Activated T-helper 1 cell treated with anti-CD3 and anti-CD28 coated beads, Interleukin-12 subunit alpha, Interleukin-12 subunit beta, Interleukin-2, Interleukin-4 antibody, amounts not matched to agents 30 ng/mL and 10 ng/mL and 1 ng/mL, durations not matched to agents 14 hours and 24 hours and 36 hours (primary cell): ENCODE measurements at regions of chr2 and their contacts with region 1.

Region 1: GRCh38 chr2:8681786-8682692 is at the start of gene ID2:
- DNase-seq: peak; percentile 99
- H3K4me3 Mint-ChIP-seq: peak within 1 kb of the TSS; percentile 99
- H3K27ac Mint-ChIP-seq: peak within 1 kb of the TSS; percentile 97
- H3K4me1 Mint-ChIP-seq: peaks cover 41% of the 10 kb centered on the region
- H3K27me3 Mint-ChIP-seq: peaks cover 14% of the 10 kb centered on the region
- total RNA-seq, gene ID2: 301 and 306 TPM in 2 replicates

Region 2: GRCh38 chr2:7203055-7203467 is 1479.0 kb before region 1 on chr2:
- intact Hi-C with region 1: loop called (anchors 1 kb)
- DNase-seq: peak; percentile 27
- H3K4me3 Mint-ChIP-seq: no peak overlapping the region
- H3K27ac Mint-ChIP-seq: no peak overlapping the region
- H3K4me1 Mint-ChIP-seq: peaks cover 4% of the 10 kb centered on the region
- H3K27me3 Mint-ChIP-seq: peaks cover 4% of the 10 kb centered on the region

Region 3: DNA sequence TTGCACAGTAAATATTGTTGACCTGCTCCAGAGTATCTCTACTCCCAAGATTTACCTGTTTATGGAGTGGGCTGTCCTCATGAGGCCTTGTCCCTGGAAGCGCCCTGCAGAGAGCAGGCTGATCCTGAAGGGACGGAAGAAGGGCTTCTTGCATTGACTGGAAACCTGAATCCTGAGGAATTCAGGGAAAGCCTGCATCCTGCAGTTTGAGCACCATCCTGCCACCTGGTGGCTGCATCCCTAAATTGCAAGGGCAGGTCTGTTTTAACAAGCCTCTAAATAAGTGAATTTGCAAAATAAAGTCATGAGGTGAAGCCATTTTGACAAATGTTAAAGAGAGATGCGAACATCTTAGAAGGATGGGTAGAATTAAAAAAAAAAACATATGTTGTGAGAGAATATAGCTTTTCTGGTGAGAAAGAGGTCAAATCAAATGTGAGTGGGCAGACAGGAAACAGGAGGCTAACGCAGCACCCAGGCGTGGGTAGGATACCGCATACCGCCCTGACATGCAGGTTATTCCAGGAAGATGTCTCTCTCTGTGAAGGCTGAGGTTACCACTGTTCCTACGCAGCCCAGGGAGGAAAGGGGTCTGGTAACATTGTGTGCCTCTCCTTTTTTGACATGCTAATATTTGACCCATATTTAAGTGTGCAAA is 1009.9 kb before region 1 on chr2:
- intact Hi-C with region 1: loop called (anchors 2 kb)
- DNase-seq: peak; percentile 43
- H3K4me3 Mint-ChIP-seq: peak overlapping the region; percentile 71
- H3K27ac Mint-ChIP-seq: peak overlapping the region; percentile 93
- H3K4me1 Mint-ChIP-seq: peaks cover 79% of the 10 kb centered on the region
- H3K27me3 Mint-ChIP-seq: no peaks in the 10 kb centered on the region

Region 4: DNA sequence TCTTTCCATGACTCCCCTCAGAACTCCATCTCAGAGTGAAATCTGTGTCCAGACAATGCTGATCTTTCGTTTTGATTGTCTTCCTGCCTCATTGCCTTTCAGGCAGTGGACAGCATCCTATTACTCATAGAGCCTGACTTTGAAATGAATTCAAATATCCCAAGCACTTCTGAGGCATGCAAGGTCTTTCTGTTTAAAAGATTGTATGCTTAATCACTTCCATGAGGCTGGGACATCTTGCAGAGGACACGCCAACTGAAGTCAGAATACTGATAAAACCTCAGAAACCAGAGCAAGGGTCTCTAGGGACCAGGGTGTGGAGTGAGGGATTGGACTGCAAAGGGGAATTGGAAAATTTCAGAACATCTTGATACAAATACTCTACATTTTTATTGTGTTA is 836.7 kb before region 1 on chr2:
- intact Hi-C with region 1: loop called (anchors 1 kb)
- DNase-seq: no peak
- H3K4me3 Mint-ChIP-seq: no peak overlapping the region
- H3K27ac Mint-ChIP-seq: no peak overlapping the region
- H3K4me1 Mint-ChIP-seq: peaks cover 57% of the 10 kb centered on the region
- H3K27me3 Mint-ChIP-seq: no peaks in the 10 kb centered on the region

Region 5: GRCh38 chr2:8234757-8235374 is 447.2 kb before region 1 on chr2:
- intact Hi-C with region 1: loop called (anchors 2 kb)
- DNase-seq: no peak
- H3K4me3 Mint-ChIP-seq: no peak overlapping the region
- H3K27ac Mint-ChIP-seq: no peak overlapping the region
- H3K4me1 Mint-ChIP-seq: peaks cover 53% of the 10 kb centered on the region
- H3K27me3 Mint-ChIP-seq: peaks cover 9% of the 10 kb centered on the region

Region 6: DNA sequence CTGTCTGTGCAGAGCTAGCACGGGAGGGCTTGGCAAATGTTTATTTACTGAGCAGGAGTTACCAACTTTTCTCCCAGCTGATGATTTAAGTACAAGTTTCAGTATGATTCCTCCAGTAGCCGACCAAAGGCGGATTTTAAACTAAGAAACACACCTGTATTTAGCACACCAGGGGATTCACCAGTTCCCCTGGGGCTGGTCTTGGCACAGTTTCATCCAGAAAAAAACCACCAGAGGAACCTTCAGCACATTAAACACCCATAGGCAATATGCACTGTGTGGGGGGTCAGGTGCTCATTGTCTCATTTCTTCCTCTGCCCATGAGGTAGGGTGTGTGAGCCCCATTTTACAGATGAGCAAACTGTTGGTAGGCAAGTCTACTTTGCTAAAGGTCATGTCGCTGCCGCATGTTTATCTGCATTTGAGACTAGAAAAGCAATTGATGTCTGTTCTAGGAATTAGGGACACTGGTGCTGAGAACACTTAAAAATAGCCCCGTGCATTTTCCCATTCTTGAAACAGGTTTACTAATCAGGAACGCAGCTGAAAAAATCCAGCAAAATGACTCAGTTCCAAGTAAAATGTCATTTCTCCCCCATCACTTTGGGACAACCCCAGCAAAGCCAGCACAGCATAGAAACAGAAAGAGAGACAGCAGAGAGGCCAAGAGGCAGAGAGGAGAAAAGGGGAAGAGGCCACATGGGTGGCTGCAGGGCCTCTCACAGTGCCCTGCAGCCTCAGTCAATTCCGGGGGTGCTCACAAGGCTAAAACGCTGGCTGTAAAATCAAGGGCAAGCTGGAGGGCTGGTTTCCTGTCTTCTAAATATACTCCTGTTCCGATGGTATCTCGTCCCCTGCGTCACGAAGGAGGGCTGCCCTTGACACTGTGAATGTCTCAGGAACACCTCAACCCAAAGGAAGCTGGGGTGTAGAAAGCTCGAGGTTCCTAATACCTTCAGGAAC is 167.0 kb before region 1 on chr2:
- intact Hi-C with region 1: loop called (anchors 1 kb)
- DNase-seq: peak; percentile 58
- H3K4me3 Mint-ChIP-seq: peak overlapping the region; percentile 35
- H3K27ac Mint-ChIP-seq: peak overlapping the region; percentile 95
- H3K4me1 Mint-ChIP-seq: peaks cover 68% of the 10 kb centered on the region
- H3K27me3 Mint-ChIP-seq: no peaks in the 10 kb centered on the region

Region 7: GRCh38 chr2:9656270-9656766 is 974.3 kb after region 1 on chr2:
- intact Hi-C with region 1: loop called (anchors 2 kb)
- DNase-seq: peak; percentile 71
- H3K4me3 Mint-ChIP-seq: peak overlapping the region; percentile 35
- H3K27ac Mint-ChIP-seq: peak overlapping the region; percentile 91
- H3K4me1 Mint-ChIP-seq: peaks cover 48% of the 10 kb centered on the region
- H3K27me3 Mint-ChIP-seq: peaks cover 3% of the 10 kb centered on the region